ENCODE measurements at regions of chr11 and their contacts with region 1.

Region 1: DNA sequence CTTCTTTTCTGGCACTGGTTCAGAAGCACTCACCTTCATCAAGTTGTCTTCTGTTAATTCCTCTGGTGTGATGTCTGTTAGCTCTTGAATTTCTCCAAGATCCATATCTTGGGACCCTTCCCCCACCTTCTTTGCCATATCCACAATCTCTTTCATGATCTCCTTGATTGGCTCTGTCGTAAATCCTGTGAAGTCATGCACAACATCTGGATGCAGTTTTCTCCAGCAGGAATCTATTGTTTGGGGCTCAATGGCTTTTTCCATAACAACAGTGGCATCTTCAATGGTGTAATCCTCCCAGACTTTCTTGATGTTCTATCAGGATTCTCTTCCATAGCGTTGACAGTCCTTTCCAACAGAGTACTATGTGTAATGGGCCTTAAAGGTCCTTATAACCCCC is 96.9 kb downstream of the CSTPP1 start:
- DNase-seq: no peak
- H3K4me3 Mint-ChIP-seq: no peak overlapping the region
- H3K27ac Mint-ChIP-seq: no peak overlapping the region
- H3K4me1 Mint-ChIP-seq: no peaks in the 10 kb centered on the region
- H3K27me3 Mint-ChIP-seq: no peaks in the 10 kb centered on the region

Region 2: GRCh38 chr11:46724088-46724487 is 309.4 kb before region 1 on chr11:
- intact Hi-C with region 1: no loop called
- DNase-seq: no peak
- H3K4me3 Mint-ChIP-seq: no peak overlapping the region
- H3K27ac Mint-ChIP-seq: no peak overlapping the region
- H3K4me1 Mint-ChIP-seq: no peaks in the 10 kb centered on the region
- H3K27me3 Mint-ChIP-seq: no peaks in the 10 kb centered on the region

Region 3: DNA sequence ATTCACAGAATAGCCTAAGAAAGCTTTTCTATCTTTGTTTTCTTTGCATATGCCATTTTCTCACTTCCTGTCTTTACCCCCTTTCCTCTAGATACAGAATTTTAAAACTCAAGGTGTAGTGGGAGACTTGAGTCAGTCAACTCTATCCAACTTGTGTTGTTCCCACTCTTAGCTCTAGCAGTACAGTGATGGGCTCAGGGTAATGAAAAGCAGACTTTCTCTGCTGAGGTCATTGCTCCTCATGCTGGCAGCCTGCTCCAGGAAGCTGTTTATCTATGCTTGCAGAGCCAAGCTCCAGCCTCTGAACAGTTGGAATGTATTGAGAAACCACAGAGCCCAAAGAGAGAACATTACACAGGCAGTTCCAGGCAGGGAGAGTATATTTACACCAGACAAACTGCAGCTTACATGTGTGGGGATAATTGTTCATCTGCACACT is 28.8 kb before region 1 on chr11:
- intact Hi-C with region 1: loop called (anchors 1 kb)
- DNase-seq: no peak
- H3K4me3 Mint-ChIP-seq: no peak overlapping the region
- H3K27ac Mint-ChIP-seq: no peak overlapping the region
- H3K4me1 Mint-ChIP-seq: peaks cover 26% of the 10 kb centered on the region
- H3K27me3 Mint-ChIP-seq: no peaks in the 10 kb centered on the region

Region 4: GRCh38 chr11:47047972-47048371 is 14.5 kb after region 1 on chr11:
- intact Hi-C with region 1: loop called (anchors 1 kb)
- DNase-seq: no peak
- H3K4me3 Mint-ChIP-seq: no peak overlapping the region
- H3K27ac Mint-ChIP-seq: no peak overlapping the region
- H3K4me1 Mint-ChIP-seq: no peaks in the 10 kb centered on the region
- H3K27me3 Mint-ChIP-seq: peaks cover 6% of the 10 kb centered on the region

Region 5: DNA sequence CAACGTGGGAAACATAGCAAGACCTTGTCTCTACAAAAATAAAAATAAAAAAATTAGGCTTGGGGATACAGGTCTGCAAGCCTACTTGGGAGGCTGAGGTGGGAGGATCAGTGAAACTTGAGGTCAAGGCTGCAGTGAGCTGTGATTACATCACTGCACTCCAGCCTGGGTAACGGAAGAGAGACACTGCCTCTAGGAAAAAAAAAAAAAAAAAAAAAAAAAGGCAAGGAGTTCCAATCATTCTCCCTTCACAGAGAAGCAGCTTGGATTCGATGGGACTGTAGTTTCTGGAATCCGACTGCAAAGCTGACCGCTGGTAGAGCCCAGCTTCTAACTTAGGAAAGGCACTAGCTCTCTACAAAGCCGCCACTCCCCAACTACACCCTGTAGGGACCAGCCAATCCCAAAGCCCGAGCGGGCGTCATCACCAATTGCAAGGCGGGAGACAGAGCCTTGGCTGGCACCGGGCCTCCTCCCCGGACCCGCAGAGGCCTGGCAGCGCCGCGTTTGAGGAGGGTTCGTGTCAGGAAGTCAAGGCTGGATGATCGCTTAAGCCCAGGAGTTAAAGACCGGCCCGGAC is 180.6 kb after region 1 on chr11:
- intact Hi-C with region 1: no loop called
- DNase-seq: peak; percentile 77
- H3K4me3 Mint-ChIP-seq: peak overlapping the region; percentile 96
- H3K27ac Mint-ChIP-seq: peak overlapping the region; percentile 100
- H3K4me1 Mint-ChIP-seq: peaks cover 45% of the 10 kb centered on the region
- H3K27me3 Mint-ChIP-seq: peaks cover 2% of the 10 kb centered on the region